WTC11 (cell line): ENCODE measurements at regions of chr22 and their contacts with region 1.

Region 1: GRCh38 chr22:20418211-20418788 is 19.3 kb downstream of the SCARF2 start:
- DNase-seq: peak; percentile 83
- ATAC-seq: peak; percentile 85
- H3K4me3 Mint-ChIP-seq: peak overlapping the region; percentile 59
- H3K27ac Mint-ChIP-seq: no peak overlapping the region
- H3K4me1 Mint-ChIP-seq: peaks cover under 1% of the 10 kb centered on the region; the same call in 1 of the 2 replicates
- H3K27me3 Mint-ChIP-seq: no peaks in the 10 kb centered on the region; the same call in 1 of the 2 replicates
- CTCF ChIP-seq: peak; percentile 80

Region 2: DNA sequence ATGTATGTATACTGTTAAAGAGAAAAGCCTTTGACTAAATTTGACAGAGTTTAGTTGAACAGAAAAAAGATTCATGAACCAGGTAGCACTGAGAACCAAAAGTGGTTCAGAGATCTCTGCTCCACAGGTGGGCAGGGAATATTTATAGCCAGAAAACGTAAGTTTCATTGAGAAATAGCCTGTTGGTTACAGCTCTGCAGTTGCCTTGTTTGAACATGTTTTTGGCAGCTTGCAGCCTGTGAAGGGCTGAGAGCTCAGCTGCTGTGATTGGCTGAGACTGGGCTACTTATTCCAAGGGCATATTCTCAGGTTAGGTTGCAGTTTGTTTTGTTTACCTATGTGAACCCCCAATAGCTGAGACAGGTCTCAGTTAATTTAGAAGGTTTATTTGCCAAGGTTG is 37.8 kb before region 1 on chr22:
- CTCF ChIA-PET with region 1: interaction called, 14 read pairs
- POLR2A ChIA-PET with region 1: no interaction called
- DNase-seq: no peak
- ATAC-seq: 0 out of 2 replicates have a peak, but pooled peaks have one; percentile 41
- H3K4me3 Mint-ChIP-seq: no peak overlapping the region
- H3K27ac Mint-ChIP-seq: peak overlapping the region; percentile 19; the same call in 1 of the 2 replicates
- H3K4me1 Mint-ChIP-seq: peaks cover 15% of the 10 kb centered on the region
- H3K27me3 Mint-ChIP-seq: no peaks in the 10 kb centered on the region; the same call in none of the 2 replicates
- CTCF ChIP-seq: no peak

Region 3: GRCh38 chr22:20430720-20431510 is 12.6 kb after region 1 on chr22:
- CTCF ChIA-PET with region 1: interaction called, 44 read pairs
- POLR2A ChIA-PET with region 1: no interaction called
- DNase-seq: peak; percentile 68
- ATAC-seq: peak; percentile 55
- H3K4me3 Mint-ChIP-seq: peak overlapping the region; percentile 66
- H3K27ac Mint-ChIP-seq: no peak overlapping the region
- H3K4me1 Mint-ChIP-seq: peaks cover 19% of the 10 kb centered on the region
- H3K27me3 Mint-ChIP-seq: peaks cover 60% of the 10 kb centered on the region
- CTCF ChIP-seq: no peak

Region 4: GRCh38 chr22:20463324-20464095 is 45.2 kb after region 1 on chr22:
- CTCF ChIA-PET with region 1: interaction called, 31 read pairs
- POLR2A ChIA-PET with region 1: interaction called, 3 read pairs
- DNase-seq: no peak
- ATAC-seq: no peak
- H3K4me3 Mint-ChIP-seq: no peak overlapping the region
- H3K27ac Mint-ChIP-seq: peak overlapping the region; percentile 53
- H3K4me1 Mint-ChIP-seq: peaks cover 20% of the 10 kb centered on the region
- H3K27me3 Mint-ChIP-seq: no peaks in the 10 kb centered on the region
- CTCF ChIP-seq: no peak

Region 5: DNA sequence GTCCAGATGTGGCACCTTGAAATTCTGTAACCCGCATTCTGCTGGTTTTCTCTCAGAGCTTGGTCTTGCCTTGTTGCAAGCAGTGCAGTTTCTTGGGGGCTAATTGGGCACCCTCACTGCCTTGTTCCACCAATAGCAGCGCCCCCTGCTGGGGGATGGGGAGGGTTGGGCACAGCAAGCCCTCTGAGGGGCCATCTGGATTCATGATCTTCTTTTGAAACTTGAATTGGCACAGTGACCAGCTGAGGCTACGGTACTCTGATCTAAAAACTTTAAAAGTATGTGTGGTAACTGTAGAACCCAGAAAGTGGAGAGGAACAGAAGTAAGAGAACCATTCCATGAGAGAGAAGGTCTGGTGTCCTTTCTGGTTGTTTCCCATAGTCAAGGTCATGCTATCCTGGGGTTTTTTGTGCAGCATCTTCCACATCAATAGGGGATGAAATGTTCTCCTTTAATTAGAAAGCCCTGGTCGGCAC is 153.3 kb after region 1 on chr22:
- CTCF ChIA-PET with region 1: interaction called, 24 read pairs
- POLR2A ChIA-PET with region 1: no interaction called
- DNase-seq: peak; percentile 72
- ATAC-seq: peak; percentile 72
- H3K4me3 Mint-ChIP-seq: no peak overlapping the region
- H3K27ac Mint-ChIP-seq: no peak overlapping the region
- H3K4me1 Mint-ChIP-seq: no peaks in the 10 kb centered on the region
- H3K27me3 Mint-ChIP-seq: no peaks in the 10 kb centered on the region
- CTCF ChIP-seq: peak; percentile 72

Region 6: DNA sequence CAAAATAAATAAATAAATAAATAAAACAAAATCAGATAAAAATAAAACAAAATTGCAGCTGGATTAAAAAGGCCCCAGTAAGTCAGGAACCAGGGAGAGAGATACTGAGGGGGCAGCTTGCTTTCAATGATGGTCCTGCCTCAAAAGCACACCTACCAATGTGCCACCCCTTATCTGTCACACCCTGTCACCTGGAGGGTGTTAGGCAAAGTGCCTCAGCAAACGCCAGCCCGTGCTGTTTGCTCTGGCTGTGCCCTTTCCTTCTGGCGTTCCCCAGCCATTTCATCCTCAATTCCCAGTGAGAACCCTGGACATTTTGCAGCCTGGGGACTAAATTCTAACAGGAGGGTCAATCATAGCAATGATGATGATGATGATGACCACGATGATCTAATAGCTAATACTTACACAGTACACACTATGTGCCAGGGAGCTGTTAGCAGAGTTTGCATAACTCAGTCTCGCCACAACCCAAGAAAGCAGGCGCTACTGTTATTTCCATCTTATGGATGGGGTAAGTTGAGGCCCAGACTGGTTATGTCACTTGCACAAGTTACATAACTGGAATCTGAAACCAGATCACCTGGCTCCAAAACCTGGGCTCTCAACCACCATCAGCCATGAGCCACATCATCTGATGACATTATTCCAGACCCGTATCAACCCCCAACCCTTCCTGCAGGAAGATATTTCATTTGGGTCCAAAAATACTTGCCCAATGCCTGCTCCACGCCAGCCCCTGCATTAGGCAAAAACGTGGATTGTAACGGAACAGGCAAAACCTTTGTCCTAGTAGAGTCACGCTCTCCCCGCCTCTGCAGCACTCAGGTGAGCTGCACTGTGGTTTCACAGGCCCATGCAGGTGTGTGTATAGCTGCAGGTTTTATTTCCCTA is 222.9 kb after region 1 on chr22:
- CTCF ChIA-PET with region 1: no interaction called
- POLR2A ChIA-PET with region 1: no interaction called
- DNase-seq: no peak
- ATAC-seq: no peak
- H3K4me3 Mint-ChIP-seq: no peak overlapping the region
- H3K27ac Mint-ChIP-seq: no peak overlapping the region
- H3K4me1 Mint-ChIP-seq: peaks cover 4% of the 10 kb centered on the region; the same call in 1 of the 2 replicates
- H3K27me3 Mint-ChIP-seq: no peaks in the 10 kb centered on the region
- CTCF ChIP-seq: no peak